ENCODE measurements at regions of chr14 and their contacts with region 1.

Region 1: GRCh38 chr14:96567289-96567899 is 65.2 kb downstream of the PAPOLA start:
- DNase-seq: no peak
- H3K4me3 ChIP-seq: no peak overlapping the region
- H3K27ac ChIP-seq: no peak overlapping the region
- H3K4me1 ChIP-seq: no peaks in the 10 kb centered on the region
- H3K27me3 ChIP-seq: no peaks in the 10 kb centered on the region
- CTCF ChIP-seq: peak in 3 of 4 experiments; percentile 31 to 56 (median 50)
- POLR2A ChIP-seq: no peak

Region 2: GRCh38 chr14:96297000-96297399 is 270.4 kb before region 1 on chr14:
- intact Hi-C with region 1: no loop called
- DNase-seq: no peak
- H3K4me3 ChIP-seq: no peak overlapping the region
- H3K27ac ChIP-seq: no peak overlapping the region
- H3K4me1 ChIP-seq: no peaks in the 10 kb centered on the region
- H3K27me3 ChIP-seq: no peaks in the 10 kb centered on the region
- CTCF ChIP-seq: peak in 3 of 4 experiments; percentile 38 to 42 (median 40)
- POLR2A ChIP-seq: no peak

Region 3: GRCh38 chr14:96741151-96741977 is 174.0 kb after region 1 on chr14:
- intact Hi-C with region 1: loop called (anchors 5 kb)
- DNase-seq: peak; percentile 23
- H3K4me3 ChIP-seq: peak overlapping the region; percentile 3 to 20
- H3K27ac ChIP-seq: no peak overlapping the region
- H3K4me1 ChIP-seq: no peaks in the 10 kb centered on the region
- H3K27me3 ChIP-seq: peaks cover 8% of the 10 kb centered on the region
- CTCF ChIP-seq: peak; percentile 70 to 81 (median 72)
- POLR2A ChIP-seq: no peak

Region 4: DNA sequence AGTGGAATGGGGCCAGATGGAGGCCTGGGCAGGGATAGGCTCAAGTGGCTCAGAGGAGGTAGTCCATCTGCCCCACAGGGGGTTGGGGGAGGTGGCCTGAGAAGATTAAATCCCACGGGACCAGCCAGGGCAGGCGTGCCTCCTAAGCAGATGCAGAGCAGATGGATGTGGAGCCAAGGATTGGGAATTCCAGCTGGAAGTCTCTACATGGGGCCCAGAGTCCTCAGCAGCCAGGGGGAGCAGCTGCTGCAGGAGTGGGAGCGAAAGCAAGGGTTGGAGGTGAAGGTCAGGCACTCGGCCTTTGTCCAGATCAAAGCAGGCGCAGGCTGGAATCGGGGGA is 187.4 kb after region 1 on chr14:
- intact Hi-C with region 1: no loop called
- DNase-seq: no peak
- H3K4me3 ChIP-seq: no peak overlapping the region
- H3K27ac ChIP-seq: no peak overlapping the region
- H3K4me1 ChIP-seq: no peaks in the 10 kb centered on the region
- H3K27me3 ChIP-seq: peaks cover 13% of the 10 kb centered on the region
- CTCF ChIP-seq: no peak
- POLR2A ChIP-seq: no peak